MCF 10A (cell line): ENCODE measurements at regions of chr1 and their contacts with region 1.

Region 1: DNA sequence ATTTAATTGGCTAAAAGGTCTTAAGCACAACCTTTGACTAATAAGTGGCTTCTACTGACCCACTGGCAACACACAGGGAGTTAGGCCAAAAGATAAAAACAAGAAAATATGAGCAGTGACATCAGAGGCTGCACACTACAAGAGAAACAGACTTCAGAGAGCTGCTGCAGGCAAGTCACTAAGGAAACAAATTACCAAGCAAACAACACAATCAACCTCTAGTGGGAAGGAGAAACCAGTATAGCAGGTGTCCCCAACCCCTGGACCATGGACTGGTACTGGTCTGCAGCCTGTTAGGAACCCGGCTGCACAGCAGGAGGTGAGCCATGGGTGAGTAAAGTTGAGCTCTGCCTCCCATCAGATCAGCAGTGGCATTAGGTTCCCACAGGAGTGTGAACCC is 20.8 kb upstream of the ENSA start:
- DNase-seq: no peak
- H3K4me3 Mint-ChIP-seq: no peak overlapping the region
- H3K27ac Mint-ChIP-seq: no peak overlapping the region
- H3K4me1 Mint-ChIP-seq: no peaks in the 10 kb centered on the region
- H3K27me3 Mint-ChIP-seq: no peaks in the 10 kb centered on the region
- CTCF ChIP-seq: no peak

Region 2: GRCh38 chr1:150572918-150573647 is 77.1 kb before region 1 on chr1:
- CTCF ChIA-PET with region 1: no interaction called
- POLR2A ChIA-PET with region 1: no interaction called
- intact Hi-C with region 1: no loop called
- DNase-seq: peak; percentile 53
- H3K4me3 Mint-ChIP-seq: peak overlapping the region; percentile 99
- H3K27ac Mint-ChIP-seq: peak overlapping the region; percentile 82
- H3K4me1 Mint-ChIP-seq: peaks cover 45% of the 10 kb centered on the region
- H3K27me3 Mint-ChIP-seq: no peaks in the 10 kb centered on the region
- CTCF ChIP-seq: no peak

Region 3: GRCh38 chr1:150661156-150661555 is 11.0 kb after region 1 on chr1:
- CTCF ChIA-PET with region 1: interaction called, 3 read pairs
- POLR2A ChIA-PET with region 1: interaction called, 13 read pairs
- intact Hi-C with region 1: no loop called
- DNase-seq: peak; percentile 46
- H3K4me3 Mint-ChIP-seq: no peak overlapping the region
- H3K27ac Mint-ChIP-seq: peak overlapping the region; percentile 65
- H3K4me1 Mint-ChIP-seq: peaks cover 13% of the 10 kb centered on the region
- H3K27me3 Mint-ChIP-seq: no peaks in the 10 kb centered on the region
- CTCF ChIP-seq: no peak